ENCODE measurements at regions of chr3 and their contacts with region 1.

Region 1: DNA sequence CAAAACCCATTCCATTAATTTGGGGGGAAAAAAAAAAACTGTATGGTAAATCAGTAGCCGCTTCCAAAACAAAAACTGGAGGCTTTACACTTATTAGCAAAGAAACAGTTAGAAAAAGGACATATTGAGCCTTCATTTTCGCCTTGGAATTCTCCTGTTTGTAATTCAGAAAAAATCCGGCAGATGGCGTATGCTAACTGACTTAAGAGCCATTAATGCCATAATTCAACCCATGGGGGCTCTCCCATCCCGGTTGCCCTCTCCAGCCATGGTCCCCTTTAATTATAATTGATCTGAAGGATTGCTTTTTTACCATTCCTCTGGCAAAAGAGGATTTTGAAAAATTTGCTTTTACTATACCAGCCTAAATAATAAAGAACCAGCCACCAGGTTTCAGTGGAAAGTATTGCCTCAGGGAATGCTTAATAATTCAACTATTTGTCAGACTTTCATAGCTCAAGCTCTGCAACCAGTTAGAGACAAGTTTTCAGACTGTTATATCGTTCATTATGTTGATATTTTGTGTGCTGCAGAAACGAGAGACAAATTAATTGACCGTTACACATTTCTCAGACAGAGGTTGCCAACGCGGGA is 9.4 kb upstream of the RPL24 start:
- DNase-seq: peak in 6 of 9 experiments; percentile 14 to 79 (median 52)
- ATAC-seq: peak; percentile 37
- H3K4me3 ChIP-seq: no peak overlapping the region
- H3K4me3 Mint-ChIP-seq: no peak overlapping the region
- H3K27ac ChIP-seq: no peak overlapping the region
- H3K27ac Mint-ChIP-seq: no peak overlapping the region
- H3K4me1 ChIP-seq: no peaks in the 10 kb centered on the region
- H3K4me1 Mint-ChIP-seq: peaks cover 2% of the 10 kb centered on the region
- H3K27me3 ChIP-seq: no peaks in the 10 kb centered on the region
- H3K27me3 Mint-ChIP-seq: no peaks in the 10 kb centered on the region
- CTCF ChIP-seq: peak; percentile 81

Region 2: DNA sequence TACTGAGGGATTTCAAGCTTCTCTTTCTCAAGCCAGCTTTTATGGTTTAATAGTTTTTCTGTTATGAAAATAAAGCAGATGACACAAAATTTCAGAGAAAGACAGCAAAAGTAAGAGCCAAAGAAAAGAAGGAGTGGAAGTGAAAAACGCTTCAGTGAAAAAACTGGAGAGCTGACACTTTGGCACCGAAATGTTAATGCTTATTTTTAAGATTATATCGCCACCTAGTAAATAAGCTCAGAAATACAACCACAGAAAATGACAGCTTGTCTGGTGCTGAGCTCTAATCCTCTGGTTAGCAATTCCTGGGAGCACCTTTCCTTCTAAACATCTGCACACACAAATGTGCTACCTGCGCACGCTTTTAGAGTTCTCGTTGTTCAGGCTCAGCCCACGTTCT is 840.6 kb after region 1 on chr3:
- CTCF ChIA-PET with region 1: no interaction called
- POLR2A ChIA-PET with region 1: no interaction called
- intact Hi-C with region 1: loop called in 1 of 2 experiments (anchors 5 kb)
- DNase-seq: peak in 2 of 9 experiments; percentile 24 to 43
- ATAC-seq: no peak
- H3K4me3 ChIP-seq: no peak overlapping the region
- H3K4me3 Mint-ChIP-seq: no peak overlapping the region
- H3K27ac ChIP-seq: no peak overlapping the region
- H3K27ac Mint-ChIP-seq: no peak overlapping the region
- H3K4me1 ChIP-seq: no peaks in the 10 kb centered on the region
- H3K4me1 Mint-ChIP-seq: peaks cover 5% of the 10 kb centered on the region
- H3K27me3 ChIP-seq: no peaks in the 10 kb centered on the region
- H3K27me3 Mint-ChIP-seq: peaks cover 9% of the 10 kb centered on the region
- CTCF ChIP-seq: peak; percentile 9